Panc1 (cell line): ENCODE measurements at regions of chrX and their contacts with region 1.

Region 1: GRCh38 chrX:76427560-76428242 is at the start of gene MAGEE1:
- DNase-seq: no peak
- ATAC-seq: peak; percentile 96
- H3K4me3 ChIP-seq: peak within 1 kb of the TSS; percentile 51 to 72
- H3K27ac ChIP-seq: no peak within 1 kb of the TSS
- H3K4me1 ChIP-seq: no peaks in the 10 kb centered on the region
- H3K27me3 ChIP-seq: no peaks in the 10 kb centered on the region
- CTCF ChIP-seq: no peak
- total RNA-seq, gene MAGEE1: 1.6 TPM

Region 2: GRCh38 chrX:76172325-76172893 is 255.3 kb before region 1 on chrX:
- CTCF ChIA-PET with region 1: no interaction called
- POLR2A ChIA-PET with region 1: interaction called, 11 read pairs
- in situ Hi-C with region 1: no loop called
- intact Hi-C with region 1: no loop called
- DNase-seq: no peak
- ATAC-seq: peak; percentile 81
- H3K4me3 ChIP-seq: peak overlapping the region; percentile 53 to 82
- H3K27ac ChIP-seq: peak overlapping the region; percentile 91
- H3K4me1 ChIP-seq: peaks cover 12% of the 10 kb centered on the region
- H3K27me3 ChIP-seq: no peaks in the 10 kb centered on the region
- CTCF ChIP-seq: no peak

Region 3: GRCh38 chrX:76657499-76657898 is 229.8 kb after region 1 on chrX:
- CTCF ChIA-PET with region 1: no interaction called
- POLR2A ChIA-PET with region 1: no interaction called
- in situ Hi-C with region 1: no loop called
- intact Hi-C with region 1: no loop called
- DNase-seq: no peak
- ATAC-seq: no peak
- H3K4me3 ChIP-seq: no peak overlapping the region
- H3K27ac ChIP-seq: no peak overlapping the region
- H3K4me1 ChIP-seq: no peaks in the 10 kb centered on the region
- H3K27me3 ChIP-seq: no peaks in the 10 kb centered on the region
- CTCF ChIP-seq: no peak